AG04449 (cell line): ENCODE measurements at regions of chr5 and their contacts with region 1.

Region 1: DNA sequence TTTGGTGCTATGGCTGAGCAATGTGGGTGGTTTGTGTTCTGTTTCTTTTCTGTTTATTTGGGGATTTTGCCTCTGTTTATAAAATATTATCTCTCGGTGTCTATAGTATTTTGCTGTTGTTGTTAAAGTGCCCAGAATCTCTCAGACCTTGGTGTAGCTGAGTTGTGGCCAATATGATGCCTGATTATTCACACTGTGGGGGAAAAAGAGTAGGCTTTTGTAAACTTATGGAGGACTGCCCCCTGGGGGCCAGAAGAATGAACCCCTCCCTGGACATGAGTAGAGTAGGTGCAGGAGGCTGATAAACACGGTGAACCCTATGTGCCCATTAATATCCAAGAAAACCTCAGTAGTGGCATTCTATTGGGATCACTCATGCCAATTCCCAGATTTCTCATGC is 49.0 kb upstream of the DPYSL3 start:
- DNase-seq: no peak
- H3K4me3 ChIP-seq: no peak overlapping the region
- CTCF ChIP-seq: peak; percentile 69

Region 2: DNA sequence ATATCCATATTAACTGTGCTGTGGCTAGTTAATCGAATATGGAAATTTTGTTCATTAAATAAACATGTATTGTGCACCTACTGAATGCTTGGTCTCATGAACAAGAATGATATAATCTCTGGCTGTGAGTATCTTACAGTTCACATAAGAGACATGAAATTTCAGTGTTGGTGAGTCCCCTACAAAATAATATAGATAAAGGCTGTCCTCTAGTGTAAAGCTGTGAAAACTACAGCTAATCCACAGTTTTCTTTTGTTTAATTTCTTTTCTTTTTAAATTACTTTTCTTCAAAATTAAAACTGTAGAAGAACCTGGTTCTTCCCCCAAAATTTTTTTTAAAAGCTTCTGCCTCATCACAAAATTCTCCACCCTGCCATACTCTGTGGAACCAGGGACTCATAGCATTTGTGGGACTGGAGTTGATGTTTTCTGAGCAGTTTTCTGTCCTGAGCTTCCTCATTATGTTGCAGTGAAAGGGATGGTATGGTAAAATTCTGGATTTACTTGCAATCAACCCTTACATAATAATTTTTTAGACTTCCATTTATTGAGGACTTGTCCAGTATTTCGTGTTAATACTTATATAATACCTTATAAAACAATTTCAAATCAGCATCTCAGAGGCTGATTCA is 189.0 kb before region 1 on chr5:
- CTCF ChIA-PET with region 1: interaction called, 30 read pairs
- POLR2A ChIA-PET with region 1: no interaction called
- DNase-seq: no peak
- H3K4me3 ChIP-seq: no peak overlapping the region
- CTCF ChIP-seq: peak; percentile 22

Region 3: GRCh38 chr5:147403651-147404640 is 154.9 kb before region 1 on chr5:
- CTCF ChIA-PET with region 1: interaction called, 39 read pairs
- POLR2A ChIA-PET with region 1: interaction called, 10 read pairs
- DNase-seq: peak; percentile 97
- H3K4me3 ChIP-seq: no peak overlapping the region
- CTCF ChIP-seq: no peak

Region 4: DNA sequence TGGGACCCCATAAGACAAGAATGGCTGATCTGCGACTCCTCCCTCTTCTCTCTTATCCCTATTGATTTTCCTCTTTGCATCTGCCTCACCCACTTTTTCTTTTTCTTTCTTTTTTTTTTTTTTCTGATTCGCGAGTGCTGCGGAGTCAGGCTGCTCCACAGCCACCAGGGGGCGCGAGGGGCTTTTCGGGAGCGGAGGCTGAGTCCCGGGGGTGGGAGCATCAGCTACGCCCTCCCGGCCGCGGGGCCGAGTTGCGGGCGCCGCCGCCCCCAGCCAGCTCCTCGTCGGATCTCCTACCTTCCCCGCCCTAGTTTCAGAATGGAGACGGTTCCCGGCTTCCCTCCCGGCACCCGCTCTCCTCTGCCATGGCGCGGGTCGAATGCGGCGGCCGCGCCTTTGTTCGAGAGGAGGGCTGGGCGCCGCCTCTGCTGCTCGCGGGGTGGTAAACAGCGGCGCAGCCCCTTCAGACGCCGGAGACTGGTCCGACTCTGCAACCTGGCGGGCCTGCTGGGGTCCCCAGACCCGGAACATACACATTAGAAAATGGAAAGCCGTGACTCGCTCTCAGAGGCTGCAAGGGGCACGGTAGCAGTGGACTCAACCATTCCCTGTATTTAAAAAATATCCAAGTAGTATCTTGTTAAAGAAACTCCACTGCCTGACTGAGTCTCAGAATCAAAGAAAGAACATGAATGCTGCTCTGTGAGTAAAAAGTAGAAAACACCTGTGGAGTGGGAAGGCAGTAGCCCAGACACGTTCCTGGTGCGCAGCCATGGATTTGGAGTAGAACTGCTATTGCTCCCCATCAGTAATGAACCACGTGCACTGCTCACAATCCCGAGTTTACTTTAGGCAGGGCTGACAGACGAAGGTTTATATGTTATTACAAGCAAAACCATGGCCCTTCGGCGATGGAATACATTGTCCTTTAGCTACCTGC is 104.7 kb before region 1 on chr5:
- CTCF ChIA-PET with region 1: interaction called, 167 read pairs
- POLR2A ChIA-PET with region 1: interaction called, 7 read pairs
- DNase-seq: no peak
- H3K4me3 ChIP-seq: peak overlapping the region; percentile 81
- CTCF ChIP-seq: peak; percentile 86

Region 5: DNA sequence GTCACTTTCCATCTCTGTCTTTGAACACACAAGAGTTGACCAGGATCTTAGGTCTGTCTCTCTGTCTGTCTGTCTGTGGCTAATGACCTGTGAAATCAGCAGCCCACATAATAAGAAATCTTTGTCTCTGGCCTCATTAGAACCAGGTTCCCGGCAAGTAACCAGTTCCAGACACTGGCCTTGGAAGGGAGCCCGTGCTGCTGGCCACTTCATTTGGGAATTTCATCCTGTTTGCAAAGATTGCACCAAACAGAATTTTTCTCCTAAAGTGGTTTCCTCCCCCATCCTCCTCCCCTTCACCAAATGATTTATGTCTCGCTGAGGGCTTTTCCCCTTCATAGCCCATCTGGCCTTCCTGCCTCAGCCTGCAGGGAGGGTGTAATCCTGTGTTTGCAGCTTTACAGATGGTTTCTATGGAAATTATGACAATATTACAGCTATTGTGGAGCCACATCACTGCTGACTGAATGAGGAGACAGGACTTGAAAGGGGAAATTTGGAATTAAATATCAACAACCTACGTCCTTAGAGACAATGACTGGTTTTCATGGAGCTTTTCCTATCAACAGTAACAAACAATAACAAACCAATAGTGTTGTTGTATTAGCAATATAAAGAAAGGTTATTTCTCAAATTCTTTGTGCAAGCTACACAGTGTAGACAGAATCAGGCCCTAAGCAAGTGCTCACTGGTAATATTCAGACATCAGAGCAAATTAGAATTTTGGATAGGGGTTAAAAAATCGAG is 74.7 kb before region 1 on chr5:
- CTCF ChIA-PET with region 1: interaction called, 26 read pairs
- POLR2A ChIA-PET with region 1: interaction called, 4 read pairs
- DNase-seq: peak; percentile 92
- H3K4me3 ChIP-seq: no peak overlapping the region
- CTCF ChIP-seq: no peak

Region 6: DNA sequence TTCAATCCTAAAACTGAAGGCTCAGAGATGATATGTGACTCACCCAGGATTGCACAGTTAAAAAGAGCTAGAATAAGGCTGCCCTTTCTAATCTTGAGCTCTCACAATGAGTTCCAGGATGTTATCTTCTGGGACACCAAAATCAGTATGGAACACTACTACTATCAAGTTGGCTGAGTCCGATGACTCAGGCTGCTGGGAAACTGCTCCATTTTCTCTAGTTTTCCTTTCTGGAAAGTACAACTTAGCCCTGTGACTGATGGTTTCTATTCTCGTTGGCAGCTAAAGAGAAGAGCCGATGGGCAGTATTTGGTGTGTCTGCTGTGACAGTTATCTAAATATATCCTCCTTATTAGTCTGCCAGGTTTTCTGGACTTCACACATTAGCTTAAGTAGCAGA is 11.1 kb before region 1 on chr5:
- CTCF ChIA-PET with region 1: interaction called, 43 read pairs
- POLR2A ChIA-PET with region 1: no interaction called
- DNase-seq: no peak
- H3K4me3 ChIP-seq: no peak overlapping the region
- CTCF ChIP-seq: no peak

Region 7: GRCh38 chr5:147613359-147613758 is 54.5 kb after region 1 on chr5:
- CTCF ChIA-PET with region 1: no interaction called
- POLR2A ChIA-PET with region 1: no interaction called
- DNase-seq: no peak
- H3K4me3 ChIP-seq: no peak overlapping the region
- CTCF ChIP-seq: no peak

Region 8: DNA sequence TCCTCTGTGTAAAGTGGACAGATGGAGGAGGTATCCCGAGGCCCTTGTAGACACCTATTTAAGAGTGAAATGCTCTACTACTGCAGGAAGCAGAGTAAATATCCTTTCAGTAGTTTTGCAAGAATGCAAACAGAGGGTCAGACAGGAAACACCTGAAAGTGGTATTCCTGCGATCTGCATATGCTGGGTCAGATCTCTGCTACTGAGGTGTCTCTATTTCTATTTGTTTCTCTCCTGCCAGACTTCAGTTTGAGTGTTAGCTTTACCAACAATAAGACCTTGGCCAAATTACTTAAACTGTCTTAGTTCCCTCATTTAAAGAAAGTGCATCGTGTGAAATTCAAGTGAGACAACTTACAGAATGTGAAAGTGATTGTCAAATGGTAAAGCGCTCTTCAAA is 176.1 kb after region 1 on chr5:
- CTCF ChIA-PET with region 1: no interaction called
- POLR2A ChIA-PET with region 1: no interaction called
- DNase-seq: no peak
- H3K4me3 ChIP-seq: no peak overlapping the region
- CTCF ChIP-seq: no peak